Heart left ventricle (tissue), 16 donors: ENCODE measurements at regions of chr9 and their contacts with region 1.

Region 1: DNA sequence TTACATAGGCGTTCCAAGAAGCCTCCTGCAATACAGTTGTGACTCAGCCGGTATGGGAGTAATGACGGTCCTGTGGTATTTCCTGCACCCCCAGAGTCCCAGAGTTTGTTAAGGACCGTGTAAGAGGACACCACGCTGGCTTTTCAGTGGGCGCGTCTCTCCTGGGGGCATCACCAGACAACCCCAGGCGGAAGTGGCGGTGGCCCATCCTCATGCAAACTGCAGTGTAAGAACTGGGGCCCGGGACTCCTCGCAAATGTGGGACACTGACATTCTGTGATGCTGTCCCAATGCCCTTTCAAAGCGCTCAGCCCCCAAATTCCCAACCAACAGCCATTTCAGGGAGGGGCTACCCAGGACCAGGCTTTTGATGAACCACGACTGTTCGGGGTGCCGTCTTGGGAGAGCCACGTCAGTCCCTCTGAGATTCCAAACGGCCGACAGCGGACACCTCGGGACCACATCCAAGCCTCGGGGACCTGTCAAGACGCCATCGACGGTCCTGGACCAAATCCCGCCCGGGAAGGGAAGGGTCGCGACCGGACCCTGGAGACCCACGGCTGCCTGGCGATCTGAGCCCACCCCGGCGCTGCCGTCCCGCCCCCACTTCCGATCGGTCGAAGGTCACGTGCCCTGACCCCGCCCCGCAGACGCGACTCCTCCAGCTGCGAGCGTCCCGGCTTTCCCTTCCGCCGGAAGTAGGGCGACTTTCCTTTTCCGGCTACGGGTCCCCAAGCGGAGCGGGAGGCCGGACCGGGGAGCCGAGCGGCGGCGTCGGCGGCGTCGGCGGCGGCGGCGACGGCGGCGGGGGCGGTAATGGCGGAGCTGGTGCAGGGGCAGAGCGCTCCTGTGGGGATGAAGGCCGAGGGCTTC is at the start of gene FUBP3:
- DNase-seq: peak; percentile 95 to 97 (median 96)
- ATAC-seq: peak; percentile 81 to 98 (median 96)
- H3K4me3 ChIP-seq: peak within 1 kb of the TSS; percentile 69 to 100 (median 90)
- H3K27ac ChIP-seq: peak within 1 kb of the TSS; percentile 70 to 98 (median 93)
- H3K4me1 ChIP-seq: peaks cover 10 to 58% (median 33%) of the 10 kb centered on the region in 12 donors
- H3K27me3 ChIP-seq: no peaks in the 10 kb centered on the region
- CTCF ChIP-seq: no peak
- POLR2A ChIP-seq: peak in 1 of 2 donors; percentile 82
- total RNA-seq, gene FUBP3: 17.5 to 39.5 (median 28.9) TPM

Region 2: GRCh38 chr9:130444565-130445221 is 134.4 kb before region 1 on chr9 and contains the start of gene ASS1:
- intact Hi-C with region 1: loop called in 1 of 10 experiments (anchors 5 kb)
- DNase-seq: peak; percentile 82 to 91 (median 86)
- ATAC-seq: peak; percentile 15 to 76 (median 62)
- H3K4me3 ChIP-seq: peak within 1 kb of the TSS; percentile 58 to 82 (median 72)
- H3K27ac ChIP-seq: peak within 1 kb of the TSS; percentile 80 to 96 (median 91)
- H3K4me1 ChIP-seq: peaks cover 5 to 54% (median 36%) of the 10 kb centered on the region in 12 donors
- H3K27me3 ChIP-seq: peaks cover 0 to 22% (median 0%) of the 10 kb centered on the region in 9 donors
- CTCF ChIP-seq: no peak
- POLR2A ChIP-seq: peak in 1 of 2 donors; percentile 65
- total RNA-seq, gene ASS1: 31.5 to 154 (median 60.5) TPM

Region 3: DNA sequence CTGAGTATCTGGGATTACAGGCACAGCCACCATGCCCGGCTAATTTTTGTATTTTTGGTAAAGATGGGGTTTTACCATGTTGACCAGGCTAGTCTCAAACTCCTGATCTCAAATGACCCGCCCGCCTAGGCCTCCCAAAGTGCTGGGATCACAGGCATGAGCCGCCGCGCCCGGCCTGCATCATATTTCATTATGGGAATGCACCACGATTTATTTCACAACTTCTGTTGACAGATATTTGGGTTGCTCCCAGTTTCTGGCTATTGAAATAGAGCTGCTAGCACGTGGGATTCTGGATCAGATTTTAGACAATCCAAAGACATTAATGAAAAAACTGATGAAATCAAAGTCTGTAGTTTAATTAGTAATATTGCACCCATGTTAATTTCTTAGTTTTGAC is 48.2 kb before region 1 on chr9:
- intact Hi-C with region 1: loop called in 2 of 10 experiments (anchors 2 to 5 kb)
- DNase-seq: peak; percentile 51 to 79 (median 75)
- ATAC-seq: peak; percentile 35 to 81 (median 72)
- H3K4me3 ChIP-seq: no peak overlapping the region
- H3K27ac ChIP-seq: peak overlapping the region in 3 of 12 donors; percentile 33 to 41 (median 34)
- H3K4me1 ChIP-seq: peaks cover 0 to 13% (median 0%) of the 10 kb centered on the region in 12 donors
- H3K27me3 ChIP-seq: peaks cover 0 to 12% (median 0%) of the 10 kb centered on the region in 9 donors
- CTCF ChIP-seq: no peak
- POLR2A ChIP-seq: no peak